ENCODE measurements at regions of chr1 and their contacts with region 1.

Region 1: DNA sequence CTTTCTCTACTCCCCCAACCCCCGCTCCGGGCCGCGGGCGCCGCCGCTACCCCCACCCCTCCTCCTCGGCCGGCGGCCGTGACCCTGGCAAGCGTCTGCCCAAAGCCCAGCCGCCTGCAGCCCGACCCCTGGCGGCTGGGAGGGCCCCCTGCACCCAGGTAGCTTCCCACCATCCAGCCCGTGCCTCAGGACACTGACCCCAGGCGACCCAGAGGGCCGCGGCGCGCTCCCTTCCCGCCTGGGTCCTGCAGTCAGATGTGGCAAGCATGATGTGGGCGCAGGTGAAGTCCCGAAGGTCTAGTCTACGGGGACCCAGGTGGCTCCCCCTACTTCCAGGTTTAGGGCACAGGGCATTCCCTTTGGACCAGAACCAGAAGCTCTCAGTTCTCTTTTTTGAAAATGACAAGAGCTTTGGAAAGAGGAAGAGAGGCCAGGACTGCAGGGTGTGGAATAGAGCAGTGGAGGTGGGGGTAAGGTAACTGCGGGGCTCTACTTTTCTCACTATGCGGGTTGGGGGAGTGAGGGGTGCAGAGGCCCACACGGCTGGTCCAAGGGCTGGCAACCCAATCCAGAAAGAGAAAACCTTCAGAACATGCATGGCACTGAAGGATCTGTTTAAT is at the start of gene DENND4B:
- DNase-seq: peak; percentile 87
- ATAC-seq: peak; percentile 74
- H3K4me3 Mint-ChIP-seq: peak within 1 kb of the TSS; percentile 88
- H3K27ac Mint-ChIP-seq: peak within 1 kb of the TSS; percentile 96
- H3K4me1 Mint-ChIP-seq: peaks cover 24% of the 10 kb centered on the region
- H3K27me3 Mint-ChIP-seq: no peaks in the 10 kb centered on the region
- total RNA-seq, gene DENND4B: 100 to 110 TPM

Region 2: DNA sequence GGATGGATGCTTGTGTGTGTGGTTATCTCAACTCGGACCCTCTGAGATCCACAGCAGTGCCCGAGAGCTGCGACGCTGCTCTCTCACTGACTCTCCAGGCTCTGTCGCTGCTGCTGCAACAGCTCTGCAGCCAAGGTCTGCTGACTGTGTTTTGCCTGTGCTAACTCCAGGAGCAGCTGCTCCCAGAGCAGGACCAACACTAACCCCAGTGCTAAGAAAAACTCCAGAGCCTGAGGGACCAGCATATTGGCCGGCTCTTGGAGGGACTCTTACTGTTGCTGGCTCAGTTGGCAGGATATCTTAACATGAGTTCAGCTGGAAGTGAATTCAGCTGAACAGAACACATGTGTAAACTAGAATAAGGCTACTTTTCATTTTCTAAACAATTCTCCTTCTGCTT is 1267.3 kb before region 1 on chr1:
- CTCF ChIA-PET with region 1: no interaction called
- POLR2A ChIA-PET with region 1: no interaction called
- intact Hi-C with region 1: no loop called
- DNase-seq: no peak
- ATAC-seq: no peak
- H3K4me3 Mint-ChIP-seq: no peak overlapping the region
- H3K27ac Mint-ChIP-seq: no peak overlapping the region
- H3K4me1 Mint-ChIP-seq: no peaks in the 10 kb centered on the region
- H3K27me3 Mint-ChIP-seq: peaks cover 20% of the 10 kb centered on the region

Region 3: DNA sequence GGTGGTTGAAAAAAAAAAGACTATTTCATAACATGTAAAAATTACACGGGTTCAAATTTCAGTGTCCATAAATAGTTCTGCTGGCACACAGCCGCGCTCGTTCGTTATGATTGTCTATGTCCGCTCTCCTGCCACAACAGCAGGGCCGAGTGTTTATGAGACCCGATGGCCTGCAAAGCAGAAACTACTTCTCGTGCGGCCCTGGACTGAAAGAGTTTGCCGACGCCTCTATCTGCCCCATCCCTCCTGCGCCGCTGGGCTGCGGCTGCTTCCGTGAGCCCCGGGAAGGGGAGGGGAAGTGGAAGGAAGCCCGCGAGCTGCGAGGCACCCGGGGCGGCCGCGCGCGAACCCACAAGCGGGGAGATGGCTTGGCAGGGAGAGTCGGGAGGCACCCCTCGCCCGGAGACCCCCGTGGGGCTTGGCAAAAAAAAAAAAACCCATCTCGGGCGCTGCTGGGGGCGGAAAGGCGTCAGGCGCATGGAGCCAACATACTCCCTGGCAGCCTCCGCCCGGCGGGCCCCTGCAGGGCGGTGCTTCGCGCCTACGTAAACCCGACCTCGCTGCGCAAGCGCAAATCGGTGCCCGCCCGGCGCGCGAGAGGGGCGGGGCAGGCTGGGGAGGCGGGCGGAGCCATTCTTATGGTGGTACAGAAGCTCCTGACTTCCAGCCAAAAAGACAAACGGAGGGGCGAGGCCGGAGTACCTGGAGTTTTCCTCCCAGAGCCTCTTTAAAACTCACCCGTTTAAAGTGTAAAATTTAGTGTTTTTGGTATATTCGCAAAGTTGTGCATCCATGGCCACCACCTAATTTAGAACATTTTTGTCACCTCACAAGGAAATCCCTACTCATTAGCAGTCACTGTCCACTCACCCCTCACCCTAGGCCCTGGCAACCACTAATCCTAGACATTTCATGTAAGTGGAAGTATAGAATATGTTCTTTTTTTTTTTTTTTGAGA is 163.2 kb before region 1 on chr1:
- CTCF ChIA-PET with region 1: no interaction called
- POLR2A ChIA-PET with region 1: no interaction called
- intact Hi-C with region 1: no loop called
- DNase-seq: peak; percentile 95
- ATAC-seq: peak; percentile 96
- H3K4me3 Mint-ChIP-seq: peak overlapping the region; percentile 90
- H3K27ac Mint-ChIP-seq: peak overlapping the region; percentile 97
- H3K4me1 Mint-ChIP-seq: peaks cover 12% of the 10 kb centered on the region
- H3K27me3 Mint-ChIP-seq: no peaks in the 10 kb centered on the region

Region 4: GRCh38 chr1:153796791-153797659 is 149.7 kb before region 1 on chr1:
- CTCF ChIA-PET with region 1: interaction called, 24 read pairs
- POLR2A ChIA-PET with region 1: no interaction called
- intact Hi-C with region 1: loop called (anchors 1 kb)
- DNase-seq: peak; percentile 92
- ATAC-seq: peak; percentile 92
- H3K4me3 Mint-ChIP-seq: no peak overlapping the region
- H3K27ac Mint-ChIP-seq: peak overlapping the region; percentile 38
- H3K4me1 Mint-ChIP-seq: no peaks in the 10 kb centered on the region
- H3K27me3 Mint-ChIP-seq: no peaks in the 10 kb centered on the region

Region 5: GRCh38 chr1:153816283-153816889 is 130.3 kb before region 1 on chr1:
- CTCF ChIA-PET with region 1: interaction called, 13 read pairs
- POLR2A ChIA-PET with region 1: no interaction called
- intact Hi-C with region 1: loop called in 1 of 2 experiments (anchors 1 kb)
- DNase-seq: no peak
- ATAC-seq: no peak
- H3K4me3 Mint-ChIP-seq: no peak overlapping the region
- H3K27ac Mint-ChIP-seq: no peak overlapping the region
- H3K4me1 Mint-ChIP-seq: no peaks in the 10 kb centered on the region
- H3K27me3 Mint-ChIP-seq: no peaks in the 10 kb centered on the region

Region 6: GRCh38 chr1:153958111-153958960 is 11.6 kb after region 1 on chr1 and contains the start of gene CRTC2:
- CTCF ChIA-PET with region 1: interaction called, 12 read pairs
- POLR2A ChIA-PET with region 1: interaction called, 6 read pairs
- intact Hi-C with region 1: loop called (anchors 1 kb)
- DNase-seq: peak; percentile 99
- ATAC-seq: peak; percentile 90
- H3K4me3 Mint-ChIP-seq: peak within 1 kb of the TSS; percentile 99
- H3K27ac Mint-ChIP-seq: peak within 1 kb of the TSS; percentile 95
- H3K4me1 Mint-ChIP-seq: peaks cover 55% of the 10 kb centered on the region
- H3K27me3 Mint-ChIP-seq: no peaks in the 10 kb centered on the region
- total RNA-seq, gene CRTC2: 60.6 to 80.4 TPM

Region 7: DNA sequence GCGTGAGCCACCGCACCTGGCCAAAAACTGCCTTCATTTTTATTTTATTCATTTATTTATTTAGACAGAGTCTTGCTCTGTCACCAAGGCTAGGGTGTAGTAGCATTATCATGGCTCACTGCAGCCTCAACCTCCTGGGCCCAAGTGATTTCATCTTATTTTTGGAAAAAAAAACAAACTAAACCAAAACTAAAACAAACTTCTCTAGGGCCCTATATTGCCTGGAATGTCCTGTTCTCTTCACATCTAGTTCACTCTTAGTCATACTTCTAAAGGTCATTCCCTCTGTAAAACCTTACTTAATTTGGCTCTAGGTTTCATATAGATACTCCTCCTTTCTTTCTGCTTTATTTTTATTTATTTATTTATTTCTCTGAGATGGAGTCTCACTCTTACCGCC is 59.4 kb after region 1 on chr1:
- CTCF ChIA-PET with region 1: no interaction called
- POLR2A ChIA-PET with region 1: no interaction called
- intact Hi-C with region 1: no loop called
- DNase-seq: no peak
- ATAC-seq: no peak
- H3K4me3 Mint-ChIP-seq: no peak overlapping the region
- H3K27ac Mint-ChIP-seq: no peak overlapping the region
- H3K4me1 Mint-ChIP-seq: no peaks in the 10 kb centered on the region
- H3K27me3 Mint-ChIP-seq: no peaks in the 10 kb centered on the region